ENCODE measurements at regions of chr10 and their contacts with region 1.

Region 1: GRCh38 chr10:76643511-76643911 is 994.1 kb downstream of the KCNMA1 start:
- DNase-seq: no peak
- ATAC-seq: no peak
- H3K4me3 ChIP-seq: no peak overlapping the region
- H3K27ac ChIP-seq: no peak overlapping the region
- H3K4me1 ChIP-seq: peaks cover 19% of the 10 kb centered on the region
- H3K27me3 ChIP-seq: no peaks in the 10 kb centered on the region
- CTCF ChIP-seq: no peak
- POLR2A ChIP-seq: no peak
- RAD21 ChIP-seq: no peak

Region 2: GRCh38 chr10:76251841-76252671 is 391.5 kb before region 1 on chr10:
- CTCF ChIA-PET with region 1: no interaction called
- POLR2A ChIA-PET with region 1: no interaction called
- dilution Hi-C with region 1: no loop called
- in situ Hi-C with region 1: no loop called
- intact Hi-C with region 1: loop called (anchors 5 kb)
- DNase-seq: peak; percentile 93
- ATAC-seq: peak; percentile 84
- H3K4me3 ChIP-seq: no peak overlapping the region
- H3K27ac ChIP-seq: no peak overlapping the region
- H3K4me1 ChIP-seq: peaks cover 3% of the 10 kb centered on the region; the same call in 1 of the 2 replicates
- H3K27me3 ChIP-seq: no peaks in the 10 kb centered on the region
- CTCF ChIP-seq: no peak
- POLR2A ChIP-seq: no peak
- RAD21 ChIP-seq: no peak

Region 3: GRCh38 chr10:76428551-76429367 is 214.8 kb before region 1 on chr10:
- CTCF ChIA-PET with region 1: no interaction called
- POLR2A ChIA-PET with region 1: no interaction called
- dilution Hi-C with region 1: no loop called
- in situ Hi-C with region 1: no loop called
- intact Hi-C with region 1: no loop called
- DNase-seq: peak; percentile 95
- ATAC-seq: peak; percentile 87
- H3K4me3 ChIP-seq: no peak overlapping the region
- H3K27ac ChIP-seq: peak overlapping the region; percentile 63; the same call in 1 of the 2 replicates
- H3K4me1 ChIP-seq: peaks cover 21% of the 10 kb centered on the region
- H3K27me3 ChIP-seq: no peaks in the 10 kb centered on the region
- CTCF ChIP-seq: no peak
- POLR2A ChIP-seq: no peak
- RAD21 ChIP-seq: no peak

Region 4: GRCh38 chr10:76523246-76523645 is 120.3 kb before region 1 on chr10:
- CTCF ChIA-PET with region 1: no interaction called
- POLR2A ChIA-PET with region 1: no interaction called
- dilution Hi-C with region 1: no loop called
- in situ Hi-C with region 1: no loop called
- intact Hi-C with region 1: no loop called
- DNase-seq: no peak
- ATAC-seq: no peak
- H3K4me3 ChIP-seq: no peak overlapping the region
- H3K27ac ChIP-seq: no peak overlapping the region
- H3K4me1 ChIP-seq: no peaks in the 10 kb centered on the region
- H3K27me3 ChIP-seq: no peaks in the 10 kb centered on the region
- CTCF ChIP-seq: no peak
- POLR2A ChIP-seq: no peak
- RAD21 ChIP-seq: no peak

Region 5: GRCh38 chr10:76583711-76584161 is 59.8 kb before region 1 on chr10:
- CTCF ChIA-PET with region 1: no interaction called
- POLR2A ChIA-PET with region 1: no interaction called
- dilution Hi-C with region 1: no loop called
- in situ Hi-C with region 1: no loop called
- intact Hi-C with region 1: loop called (anchors 2 kb)
- DNase-seq: peak; percentile 90
- ATAC-seq: peak; percentile 80
- H3K4me3 ChIP-seq: no peak overlapping the region
- H3K27ac ChIP-seq: no peak overlapping the region
- H3K4me1 ChIP-seq: peaks cover 16% of the 10 kb centered on the region
- H3K27me3 ChIP-seq: no peaks in the 10 kb centered on the region
- CTCF ChIP-seq: no peak
- POLR2A ChIP-seq: no peak
- RAD21 ChIP-seq: no peak

Region 6: DNA sequence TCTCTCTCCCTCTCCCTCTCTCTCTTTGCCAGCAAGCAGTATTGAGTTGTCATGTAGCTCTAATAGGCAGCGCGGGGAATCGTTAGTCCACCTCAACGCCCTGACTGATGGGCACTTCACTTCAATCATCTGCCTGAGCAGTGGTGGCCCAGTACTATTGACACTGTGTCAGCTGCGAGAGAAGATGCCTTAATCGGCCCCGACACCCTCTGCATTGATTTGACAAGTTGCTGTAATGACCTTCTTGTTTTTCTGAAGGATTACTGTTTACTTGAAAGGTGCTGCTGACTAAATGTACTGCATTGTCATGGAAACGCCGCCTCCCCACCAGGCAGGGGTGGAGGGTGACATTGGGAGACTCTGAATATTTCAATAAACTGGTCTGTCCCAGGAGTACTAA is 80.3 kb after region 1 on chr10:
- CTCF ChIA-PET with region 1: no interaction called
- POLR2A ChIA-PET with region 1: no interaction called
- dilution Hi-C with region 1: no loop called
- in situ Hi-C with region 1: no loop called
- intact Hi-C with region 1: no loop called
- DNase-seq: no peak
- ATAC-seq: no peak
- H3K4me3 ChIP-seq: no peak overlapping the region
- H3K27ac ChIP-seq: no peak overlapping the region
- H3K4me1 ChIP-seq: no peaks in the 10 kb centered on the region
- H3K27me3 ChIP-seq: peaks cover 6% of the 10 kb centered on the region
- CTCF ChIP-seq: no peak
- POLR2A ChIP-seq: no peak
- RAD21 ChIP-seq: no peak